Activated CD4-positive, alpha-beta memory T cell treated with anti-CD3 and anti-CD28 coated beads, Interleukin-2, amount 10 ng/mL, durations not matched to agents 7 days and 5 days (primary cell): ENCODE measurements at regions of chr3 and their contacts with region 1.

Region 1: DNA sequence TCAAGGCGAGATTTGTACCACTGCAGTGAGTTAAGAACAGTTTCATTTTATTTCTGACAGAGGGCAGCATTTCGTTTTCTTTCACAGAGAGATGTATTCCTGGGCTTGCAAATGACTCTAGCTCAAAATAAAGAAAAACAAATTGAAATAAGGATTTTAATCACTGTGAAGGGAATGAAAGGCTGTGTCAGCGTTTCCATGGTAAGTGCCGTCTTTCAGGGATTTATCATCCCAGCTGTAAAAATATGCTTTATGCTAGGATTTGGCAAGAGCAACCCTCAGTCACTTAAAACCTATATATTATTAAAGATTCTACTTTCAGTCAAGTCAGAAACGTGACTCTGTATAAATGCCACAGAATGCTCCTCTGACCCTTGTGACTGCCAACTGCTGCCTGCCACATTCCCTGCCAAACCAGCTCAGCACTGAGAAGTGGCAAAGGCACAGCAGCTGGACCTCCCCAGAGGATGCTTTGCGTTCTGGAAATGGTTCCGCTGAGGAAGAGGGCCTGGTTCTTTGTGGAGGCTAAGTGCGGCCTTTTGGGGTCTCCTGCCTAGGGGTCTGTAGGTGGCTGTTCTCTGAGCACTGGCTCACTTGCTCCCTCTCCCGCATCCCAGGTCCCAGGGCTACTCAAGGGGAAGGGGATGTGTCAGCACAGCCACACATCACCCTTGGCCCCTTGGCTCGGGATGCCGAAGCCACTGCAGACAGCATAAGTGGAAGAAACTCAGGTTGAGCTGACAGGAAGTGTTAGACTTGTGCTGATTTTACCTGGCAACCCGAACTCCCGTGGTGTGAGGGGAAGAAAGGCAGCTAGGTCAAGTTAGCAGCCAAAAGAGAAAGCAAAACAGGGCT is 56.6 kb upstream of the POMGNT2 start:
- DNase-seq: peak; percentile 70
- H3K4me3 Mint-ChIP-seq: peak overlapping the region; percentile 61
- H3K27ac Mint-ChIP-seq: peak overlapping the region; percentile 97
- H3K4me1 Mint-ChIP-seq: peaks cover 28% of the 10 kb centered on the region
- H3K27me3 Mint-ChIP-seq: peaks cover 2% of the 10 kb centered on the region

Region 2: DNA sequence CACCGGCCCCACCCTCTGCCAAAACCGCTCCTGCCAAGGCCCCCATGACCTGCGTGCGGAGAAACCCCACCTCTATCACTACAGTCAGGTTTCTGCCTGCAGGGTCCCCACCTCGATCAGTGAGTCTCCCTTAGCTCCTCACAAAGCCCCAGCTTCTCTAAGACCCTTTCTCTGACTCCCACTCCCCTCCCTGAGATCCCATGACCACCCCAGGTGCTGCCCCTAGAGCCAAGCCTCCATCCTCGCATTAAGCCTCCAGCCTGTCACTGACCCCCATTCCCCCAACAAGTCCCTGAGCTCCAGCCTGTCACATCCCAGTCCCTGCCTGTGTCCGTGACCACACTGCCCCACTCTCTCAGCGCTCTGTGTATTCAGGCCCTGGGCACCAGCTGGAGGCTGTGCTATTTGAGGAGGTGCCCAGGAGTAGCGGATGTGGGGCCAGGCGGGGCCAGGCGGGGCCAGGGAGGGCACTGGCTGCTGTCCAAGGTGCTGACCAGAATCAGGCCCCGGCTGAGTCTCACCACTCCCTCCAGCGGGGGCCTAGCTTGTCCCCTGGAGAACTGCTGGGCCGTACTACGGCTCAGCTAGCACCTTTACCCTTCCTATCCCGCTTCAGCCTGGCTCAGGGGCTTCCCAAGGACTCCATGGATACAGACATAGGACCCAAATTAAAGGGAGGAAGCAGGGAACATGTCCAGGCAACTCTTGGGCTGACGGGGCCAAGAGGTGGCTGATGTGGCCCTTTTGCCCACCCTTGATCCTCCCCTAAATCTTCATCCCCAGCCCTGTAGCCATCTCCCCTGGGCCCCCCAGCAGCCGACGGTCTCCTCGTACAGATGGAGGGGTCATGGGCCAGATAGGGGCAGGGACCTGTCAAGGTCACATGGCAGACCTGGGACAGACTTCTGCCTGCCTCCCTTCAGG is 461.1 kb before region 1 on chr3:
- CTCF ChIA-PET with region 1: no interaction called
- POLR2A ChIA-PET with region 1: no interaction called
- DNase-seq: peak; percentile 78
- H3K4me3 Mint-ChIP-seq: no peak overlapping the region
- H3K27ac Mint-ChIP-seq: no peak overlapping the region
- H3K4me1 Mint-ChIP-seq: peaks cover 22% of the 10 kb centered on the region
- H3K27me3 Mint-ChIP-seq: peaks cover 4% of the 10 kb centered on the region

Region 3: GRCh38 chr3:43180027-43180426 is 17.6 kb after region 1 on chr3:
- CTCF ChIA-PET with region 1: interaction called, 28 read pairs
- POLR2A ChIA-PET with region 1: interaction called, 41 read pairs
- DNase-seq: peak; percentile 66
- H3K4me3 Mint-ChIP-seq: peak overlapping the region; percentile 48
- H3K27ac Mint-ChIP-seq: peak overlapping the region; percentile 93
- H3K4me1 Mint-ChIP-seq: peaks cover 48% of the 10 kb centered on the region
- H3K27me3 Mint-ChIP-seq: no peaks in the 10 kb centered on the region

Region 4: DNA sequence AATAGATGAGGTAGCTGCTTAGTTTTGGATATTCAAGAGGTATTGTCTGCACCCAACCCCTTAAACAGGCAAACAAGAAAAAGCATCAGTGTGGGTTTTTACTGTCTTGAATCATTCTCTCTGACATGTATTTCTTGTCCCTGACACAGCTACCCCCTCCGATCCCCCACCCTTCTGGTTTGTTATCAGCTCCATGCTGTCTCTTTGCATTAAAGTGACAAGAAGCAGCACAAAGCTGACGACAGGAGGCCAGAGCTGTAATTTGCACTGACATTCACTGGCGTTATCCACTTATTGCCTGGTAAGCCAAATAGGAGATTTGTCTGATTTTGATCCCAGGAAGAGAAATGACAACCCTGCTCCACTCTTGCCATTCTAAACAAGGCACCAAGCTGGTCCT is 40.6 kb after region 1 on chr3:
- CTCF ChIA-PET with region 1: no interaction called
- POLR2A ChIA-PET with region 1: no interaction called
- DNase-seq: no peak
- H3K4me3 Mint-ChIP-seq: no peak overlapping the region
- H3K27ac Mint-ChIP-seq: no peak overlapping the region
- H3K4me1 Mint-ChIP-seq: peaks cover 13% of the 10 kb centered on the region
- H3K27me3 Mint-ChIP-seq: peaks cover 18% of the 10 kb centered on the region

Region 5: GRCh38 chr3:43296565-43296964 is 134.1 kb after region 1 on chr3:
- CTCF ChIA-PET with region 1: interaction called, 6 read pairs
- POLR2A ChIA-PET with region 1: interaction called, 15 read pairs
- DNase-seq: peak; percentile 69
- H3K4me3 Mint-ChIP-seq: peak overlapping the region; percentile 72
- H3K27ac Mint-ChIP-seq: peak overlapping the region; percentile 87
- H3K4me1 Mint-ChIP-seq: peaks cover 77% of the 10 kb centered on the region
- H3K27me3 Mint-ChIP-seq: no peaks in the 10 kb centered on the region

Region 6: DNA sequence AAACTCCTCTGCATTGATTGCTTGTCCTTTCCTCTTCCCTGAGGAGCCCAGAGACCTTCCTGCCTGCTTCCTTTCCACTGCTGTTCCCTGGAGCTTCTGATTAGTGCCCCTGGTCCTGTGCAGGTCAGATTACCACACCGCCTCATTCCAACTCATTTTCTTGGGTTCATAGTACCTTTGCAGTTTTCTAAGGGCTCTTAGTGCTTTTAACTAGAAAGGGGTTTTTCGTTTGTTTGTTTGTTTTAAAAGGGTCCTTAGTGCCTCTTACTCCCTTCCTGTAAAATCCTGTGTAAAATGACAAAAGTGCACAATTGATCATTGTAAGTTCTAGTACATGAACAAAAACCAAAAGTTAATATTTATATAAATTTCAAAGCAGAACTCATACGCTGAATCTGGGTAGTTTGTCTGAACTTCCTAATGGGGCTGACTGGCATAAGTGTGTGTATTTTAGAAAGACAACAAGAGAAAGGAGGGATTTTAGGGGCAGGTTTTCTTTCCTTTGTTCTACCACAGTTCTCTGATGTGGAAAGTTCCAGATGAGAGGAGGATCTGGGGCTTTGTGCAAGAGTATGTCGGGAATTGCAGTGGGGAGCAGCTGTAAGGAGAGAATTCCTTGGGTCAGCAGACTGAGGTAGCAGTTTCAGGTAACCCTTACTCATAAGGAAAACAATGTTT is 154.5 kb after region 1 on chr3:
- CTCF ChIA-PET with region 1: no interaction called
- POLR2A ChIA-PET with region 1: no interaction called
- DNase-seq: no peak
- H3K4me3 Mint-ChIP-seq: no peak overlapping the region
- H3K27ac Mint-ChIP-seq: no peak overlapping the region
- H3K4me1 Mint-ChIP-seq: peaks cover 17% of the 10 kb centered on the region
- H3K27me3 Mint-ChIP-seq: no peaks in the 10 kb centered on the region

Region 7: DNA sequence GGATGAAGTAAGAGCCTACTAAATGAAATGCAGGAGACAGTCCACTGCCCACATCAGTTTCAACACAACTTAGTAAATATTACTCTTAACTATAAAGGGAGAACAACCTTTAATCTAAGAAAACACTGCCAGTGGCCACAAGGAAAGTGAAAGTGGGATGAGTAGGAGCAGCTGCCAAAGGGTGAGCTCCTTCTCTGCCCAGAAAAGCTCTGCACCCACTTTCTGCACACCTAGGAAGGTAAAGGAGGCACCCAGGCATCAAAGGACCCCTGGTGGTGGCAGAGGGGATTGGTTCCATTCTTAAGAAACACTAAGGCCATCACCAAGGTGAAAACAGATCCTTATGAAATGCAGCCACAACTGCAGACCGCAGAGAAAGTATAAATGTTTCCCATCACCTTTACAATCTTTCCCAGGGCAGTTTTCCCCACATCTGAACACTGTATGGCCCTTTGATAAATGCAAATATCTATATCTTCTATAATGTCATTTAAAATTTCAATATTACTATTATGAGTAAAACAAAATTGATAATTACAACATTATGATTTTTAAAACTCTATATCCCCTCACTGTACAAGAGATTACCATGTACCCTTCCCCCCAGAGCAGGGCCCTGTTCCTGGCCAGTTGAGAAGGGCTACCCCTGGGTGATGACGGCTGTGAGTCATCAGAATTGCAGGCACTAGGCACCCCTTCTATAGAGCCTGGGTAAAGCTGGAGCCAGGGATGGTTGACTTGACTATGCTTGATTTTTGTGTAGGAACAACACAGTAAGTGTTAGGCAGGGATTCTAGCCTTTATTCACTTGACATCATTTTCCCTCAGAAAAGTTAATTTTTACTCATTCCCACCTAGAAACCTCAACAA is 215.8 kb after region 1 on chr3:
- CTCF ChIA-PET with region 1: interaction called, 49 read pairs
- POLR2A ChIA-PET with region 1: interaction called, 5 read pairs
- DNase-seq: peak; percentile 75
- H3K4me3 Mint-ChIP-seq: no peak overlapping the region
- H3K27ac Mint-ChIP-seq: no peak overlapping the region
- H3K4me1 Mint-ChIP-seq: peaks cover 12% of the 10 kb centered on the region
- H3K27me3 Mint-ChIP-seq: no peaks in the 10 kb centered on the region

Region 8: GRCh38 chr3:43503067-43503728 is 340.7 kb after region 1 on chr3:
- CTCF ChIA-PET with region 1: interaction called, 64 read pairs
- POLR2A ChIA-PET with region 1: interaction called, 5 read pairs
- DNase-seq: no peak
- H3K4me3 Mint-ChIP-seq: no peak overlapping the region
- H3K27ac Mint-ChIP-seq: no peak overlapping the region
- H3K4me1 Mint-ChIP-seq: peaks cover 41% of the 10 kb centered on the region
- H3K27me3 Mint-ChIP-seq: no peaks in the 10 kb centered on the region